PC-9 (cell line): ENCODE measurements at regions of chr4 and their contacts with region 1.

Region 1: GRCh38 chr4:3803946-3804345 is 37.8 kb downstream of the ADRA2C start:
- DNase-seq: no peak
- H3K4me3 ChIP-seq: no peak overlapping the region
- H3K27ac ChIP-seq: no peak overlapping the region
- H3K4me1 ChIP-seq: no peaks in the 10 kb centered on the region
- H3K27me3 ChIP-seq: peaks cover 92% of the 10 kb centered on the region
- CTCF ChIP-seq: no peak

Region 2: DNA sequence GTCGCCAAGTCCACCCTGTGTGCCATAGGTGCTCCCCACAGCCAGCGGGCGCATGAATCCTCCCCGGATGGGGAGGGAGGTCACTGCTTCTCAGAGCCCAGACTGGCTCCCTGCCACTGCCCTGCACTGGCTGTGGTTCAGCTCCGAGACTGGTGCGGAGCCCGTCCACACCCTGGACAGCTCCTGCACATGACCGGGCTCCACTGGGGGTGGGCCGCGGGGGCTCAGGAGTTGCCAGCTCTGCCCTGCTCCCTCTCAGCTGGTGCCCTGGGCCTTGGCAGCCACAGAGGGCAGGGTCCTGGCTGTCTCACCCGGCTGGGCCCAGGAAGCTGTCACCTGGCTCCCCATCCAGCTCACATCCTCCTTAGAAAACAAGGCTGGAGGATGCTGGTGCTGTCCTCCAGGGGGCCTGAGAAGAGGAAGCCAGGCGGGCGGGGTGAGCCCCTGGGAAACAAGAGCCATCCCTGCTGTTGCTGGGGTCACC is 102.7 kb before region 1 on chr4:
- CTCF ChIA-PET with region 1: interaction called, 12 read pairs
- POLR2A ChIA-PET with region 1: no interaction called
- intact Hi-C with region 1: no loop called
- DNase-seq: no peak
- H3K4me3 ChIP-seq: no peak overlapping the region
- H3K27ac ChIP-seq: no peak overlapping the region
- H3K4me1 ChIP-seq: no peaks in the 10 kb centered on the region
- H3K27me3 ChIP-seq: peaks cover 82% of the 10 kb centered on the region
- CTCF ChIP-seq: no peak